CD4-positive, alpha-beta memory T cell (primary cell): ENCODE measurements at regions of chr1 and their contacts with region 1.

Region 1: GRCh38 chr1:167517535-167518330 is 596 bp downstream of the CD247 start:
- DNase-seq: peak; percentile 71 to 94 (median 76)
- H3K4me3 ChIP-seq: peak overlapping the region; percentile 82 to 83
- H3K4me3 Mint-ChIP-seq: peak overlapping the region; percentile 95 to 100 (median 99)
- H3K27ac ChIP-seq: peak overlapping the region; percentile 94
- H3K27ac Mint-ChIP-seq: peak overlapping the region; percentile 97 to 100 (median 99)
- H3K4me1 ChIP-seq: peaks cover 49% of the 10 kb centered on the region
- H3K4me1 Mint-ChIP-seq: peaks cover 22 to 70% (median 37%) of the 10 kb centered on the region in 4 donors
- H3K27me3 ChIP-seq: no peaks in the 10 kb centered on the region
- H3K27me3 Mint-ChIP-seq: no peaks in the 10 kb centered on the region

Region 2: DNA sequence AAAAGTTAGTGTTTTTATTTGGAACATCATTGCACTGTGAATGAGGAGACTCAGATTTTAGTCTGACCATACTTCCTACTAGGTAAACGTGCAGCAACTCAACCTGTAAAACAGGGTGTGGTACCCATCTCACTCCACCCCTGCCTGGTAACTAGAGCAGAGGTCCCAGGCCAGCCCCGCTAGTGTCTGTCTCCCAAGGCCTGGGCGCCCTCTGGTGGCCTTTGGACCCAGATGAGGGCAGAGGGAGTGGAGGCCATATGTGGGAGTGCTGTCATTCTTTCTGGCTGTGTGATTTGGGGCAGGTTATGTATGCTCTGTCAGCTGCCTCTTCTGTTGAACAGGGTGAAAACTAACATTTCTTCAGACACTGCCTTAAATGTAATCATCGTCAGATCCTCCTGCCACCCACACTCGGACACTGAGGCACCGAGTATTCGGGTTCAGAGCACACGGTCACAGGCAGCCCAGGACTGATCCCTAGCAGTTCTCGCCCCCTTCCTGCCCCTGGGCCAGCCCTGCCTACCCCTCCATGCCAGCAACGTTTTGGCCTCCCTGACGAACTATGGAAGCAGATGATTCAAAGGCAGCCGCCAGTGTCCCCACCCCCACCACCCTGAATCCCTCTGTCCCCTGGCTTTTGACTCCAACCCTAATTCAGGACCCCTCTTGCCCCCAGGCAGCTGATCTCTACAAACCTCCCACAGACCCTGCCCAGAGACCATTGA is 75.4 kb before region 1 on chr1:
- CTCF ChIA-PET with region 1: interaction called, 50 read pairs
- POLR2A ChIA-PET with region 1: interaction called, 105 read pairs
- intact Hi-C with region 1: loop called (anchors 1 kb)
- DNase-seq: peak; percentile 82 to 89 (median 85)
- H3K4me3 ChIP-seq: no peak overlapping the region
- H3K4me3 Mint-ChIP-seq: peak overlapping the region in 5 of 8 donors; percentile 26 to 61 (median 54)
- H3K27ac ChIP-seq: peak overlapping the region; percentile 17
- H3K27ac Mint-ChIP-seq: peak overlapping the region; percentile 75 to 94 (median 88)
- H3K4me1 ChIP-seq: peaks cover 82% of the 10 kb centered on the region
- H3K4me1 Mint-ChIP-seq: peaks cover 61 to 94% (median 76%) of the 10 kb centered on the region in 4 donors
- H3K27me3 ChIP-seq: no peaks in the 10 kb centered on the region
- H3K27me3 Mint-ChIP-seq: no peaks in the 10 kb centered on the region

Region 3: GRCh38 chr1:167467126-167467710 is 50.5 kb before region 1 on chr1:
- CTCF ChIA-PET with region 1: interaction called, 3 read pairs
- POLR2A ChIA-PET with region 1: interaction called, 17 read pairs
- intact Hi-C with region 1: no loop called
- DNase-seq: no peak
- H3K4me3 ChIP-seq: no peak overlapping the region
- H3K4me3 Mint-ChIP-seq: no peak overlapping the region
- H3K27ac ChIP-seq: no peak overlapping the region
- H3K27ac Mint-ChIP-seq: peak overlapping the region; percentile 37 to 100 (median 72)
- H3K4me1 ChIP-seq: peaks cover 95% of the 10 kb centered on the region
- H3K4me1 Mint-ChIP-seq: peaks cover 52 to 94% (median 69%) of the 10 kb centered on the region in 4 donors
- H3K27me3 ChIP-seq: no peaks in the 10 kb centered on the region
- H3K27me3 Mint-ChIP-seq: no peaks in the 10 kb centered on the region

Region 4: GRCh38 chr1:167491586-167492461 is 25.9 kb before region 1 on chr1:
- CTCF ChIA-PET with region 1: interaction called, 7 read pairs
- POLR2A ChIA-PET with region 1: interaction called, 236 read pairs
- intact Hi-C with region 1: loop called (anchors 2 kb)
- DNase-seq: peak; percentile 36 to 64 (median 43)
- H3K4me3 ChIP-seq: peak overlapping the region; percentile 4 to 13
- H3K4me3 Mint-ChIP-seq: peak overlapping the region; percentile 67 to 85 (median 79)
- H3K27ac ChIP-seq: peak overlapping the region; percentile 64
- H3K27ac Mint-ChIP-seq: peak overlapping the region; percentile 87 to 100 (median 94)
- H3K4me1 ChIP-seq: peaks cover 99% of the 10 kb centered on the region
- H3K4me1 Mint-ChIP-seq: peaks cover 76 to 100% (median 88%) of the 10 kb centered on the region in 4 donors
- H3K27me3 ChIP-seq: no peaks in the 10 kb centered on the region
- H3K27me3 Mint-ChIP-seq: no peaks in the 10 kb centered on the region

Region 5: GRCh38 chr1:167542109-167543032 is 24.6 kb after region 1 on chr1:
- CTCF ChIA-PET with region 1: interaction called, 25 read pairs
- POLR2A ChIA-PET with region 1: interaction called, 3 read pairs
- intact Hi-C with region 1: no loop called
- DNase-seq: no peak
- H3K4me3 ChIP-seq: no peak overlapping the region
- H3K4me3 Mint-ChIP-seq: peak overlapping the region in 1 of 8 donors; percentile 33
- H3K27ac ChIP-seq: no peak overlapping the region
- H3K27ac Mint-ChIP-seq: peak overlapping the region in 5 of 7 donors; percentile 1 to 64 (median 32)
- H3K4me1 ChIP-seq: peaks cover 6% of the 10 kb centered on the region
- H3K4me1 Mint-ChIP-seq: peaks cover 9 to 19% (median 16%) of the 10 kb centered on the region in 4 donors
- H3K27me3 ChIP-seq: no peaks in the 10 kb centered on the region
- H3K27me3 Mint-ChIP-seq: no peaks in the 10 kb centered on the region